ENCODE measurements at regions of chr19 and their contacts with region 1.

Region 1: GRCh38 chr19:7535035-7535992 is at the start of gene PNPLA6:
- DNase-seq: peak; percentile 96
- ATAC-seq: peak; percentile 84
- H3K4me3 Mint-ChIP-seq: peak within 1 kb of the TSS; percentile 93
- H3K27ac Mint-ChIP-seq: peak within 1 kb of the TSS; percentile 84
- H3K4me1 Mint-ChIP-seq: peaks cover 22% of the 10 kb centered on the region
- H3K27me3 Mint-ChIP-seq: no peaks in the 10 kb centered on the region
- total RNA-seq, gene PNPLA6: 160 to 184 TPM

Region 2: DNA sequence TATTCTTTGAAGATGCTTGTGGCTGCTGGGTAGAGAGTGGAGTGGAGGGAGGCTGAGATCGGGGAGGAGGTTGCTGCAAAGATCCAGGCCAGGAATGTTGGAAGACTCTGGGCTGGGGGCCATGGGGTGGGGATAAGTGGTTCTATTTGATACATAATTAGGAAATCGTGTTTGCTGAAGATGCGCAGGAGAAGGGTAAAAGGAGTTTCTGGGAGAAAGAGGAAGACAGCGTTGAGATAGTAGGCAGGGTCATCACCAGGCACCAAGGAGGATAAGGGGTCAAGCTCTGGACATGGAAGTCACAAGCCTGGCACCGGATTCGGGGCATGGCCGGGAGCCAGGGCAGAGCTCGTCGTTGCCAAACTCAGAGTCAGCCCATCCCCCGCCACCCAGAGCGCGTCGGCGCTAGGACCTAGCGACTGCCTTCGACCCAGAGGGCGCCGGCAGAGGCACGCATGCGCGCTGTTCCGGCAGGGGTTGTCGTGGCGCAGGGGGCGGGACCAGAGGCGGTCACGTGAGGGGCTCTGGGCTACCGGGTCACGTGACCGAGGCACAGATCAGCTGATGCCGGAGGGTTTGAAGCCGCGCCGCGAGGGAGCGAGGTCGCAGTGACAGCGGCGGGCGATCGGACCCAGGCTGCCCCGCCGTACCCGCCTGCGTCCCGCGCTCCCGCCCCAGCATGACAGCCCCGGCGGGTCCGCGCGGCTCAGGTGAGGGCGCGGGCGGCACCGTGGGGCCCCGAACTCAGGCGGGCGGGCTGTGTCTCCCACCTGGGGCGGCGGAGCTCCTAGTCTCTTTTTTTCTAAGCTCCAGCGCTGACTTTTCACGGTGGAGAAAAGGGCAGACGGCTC is 13.0 kb before region 1 on chr19 and contains the start of gene MCOLN1:
- CTCF ChIA-PET with region 1: interaction called, 37 read pairs
- DNase-seq: peak; percentile 99
- ATAC-seq: peak; percentile 94
- H3K4me3 Mint-ChIP-seq: peak within 1 kb of the TSS; percentile 73
- H3K27ac Mint-ChIP-seq: peak within 1 kb of the TSS; percentile 87
- H3K4me1 Mint-ChIP-seq: peaks cover 9% of the 10 kb centered on the region
- H3K27me3 Mint-ChIP-seq: no peaks in the 10 kb centered on the region
- total RNA-seq, gene MCOLN1: 15.8 to 20.7 TPM

Region 3: DNA sequence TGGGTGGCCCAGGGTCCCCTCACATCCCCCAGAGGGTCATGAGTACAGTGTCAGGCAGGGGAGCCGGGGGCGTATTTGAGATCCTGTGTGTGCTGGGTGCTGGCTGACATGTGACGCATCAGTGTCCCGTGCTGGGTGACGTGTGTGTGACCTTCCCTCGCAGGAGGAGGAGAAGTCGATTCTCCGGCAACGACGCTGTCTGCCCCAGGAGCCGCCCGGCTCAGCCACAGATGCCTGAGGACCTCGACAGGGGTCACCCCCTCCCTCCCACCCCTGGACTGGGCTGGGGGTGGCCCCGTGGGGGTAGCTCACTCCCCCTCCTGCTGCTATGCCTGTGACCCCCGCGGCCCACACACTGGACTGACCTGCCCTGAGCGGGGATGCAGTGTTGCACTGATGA is 26.0 kb after region 1 on chr19:
- CTCF ChIA-PET with region 1: no interaction called
- DNase-seq: no peak
- ATAC-seq: no peak
- H3K4me3 Mint-ChIP-seq: no peak overlapping the region
- H3K27ac Mint-ChIP-seq: no peak overlapping the region
- H3K4me1 Mint-ChIP-seq: peaks cover 4% of the 10 kb centered on the region
- H3K27me3 Mint-ChIP-seq: no peaks in the 10 kb centered on the region

Measured in activated CD8-positive, alpha-beta memory T cell treated with anti-CD3 and anti-CD28 coated beads, Interleukin-2, amount 10 ng/mL, durations not matched to agents 7 days and 5 days (primary cell).